Body of pancreas (tissue), 4 donors: ENCODE measurements at regions of chr6 and their contacts with region 1.

Region 1: DNA sequence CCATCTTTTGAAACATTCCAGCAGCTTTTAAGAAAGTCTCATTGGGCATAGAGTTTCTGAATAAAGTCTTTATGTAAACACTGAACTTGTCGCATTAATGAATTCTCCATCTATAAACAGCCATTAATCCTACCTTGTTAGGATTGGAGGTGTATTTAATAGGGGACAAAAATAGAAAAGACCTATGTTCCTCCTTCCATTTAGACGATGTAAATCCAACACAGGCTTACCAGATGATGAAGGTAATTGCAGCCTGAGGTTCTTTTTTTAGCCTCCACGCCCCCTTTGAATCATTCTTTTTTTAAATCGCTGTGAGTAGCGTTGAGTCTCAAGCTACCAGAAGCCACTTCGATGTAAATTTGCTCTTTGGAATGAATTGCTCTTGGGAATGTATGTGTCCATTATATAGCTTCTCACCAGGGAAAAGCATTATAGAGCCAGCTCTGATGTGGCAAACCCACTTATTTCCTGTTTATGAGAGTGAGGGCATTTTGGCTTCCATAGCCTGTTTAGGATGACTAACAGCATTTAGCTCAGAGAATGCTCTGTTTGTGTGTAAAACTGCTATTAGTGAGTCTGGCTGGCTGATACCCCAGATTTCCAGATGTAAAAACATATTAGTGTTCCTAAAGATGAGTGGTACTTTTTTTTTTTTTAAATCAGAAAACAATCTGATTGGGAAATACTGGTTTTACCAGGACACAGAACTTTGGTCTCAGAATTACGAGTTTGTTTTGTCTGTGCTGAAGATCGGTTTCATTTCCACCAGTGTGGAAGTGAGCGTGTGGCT is 74.9 kb upstream of the CLDN20 start:
- DNase-seq: peak in 1 of 4 donors; percentile 16
- ATAC-seq: no peak
- H3K4me3 ChIP-seq: no peak overlapping the region
- H3K27ac ChIP-seq: peak overlapping the region in 2 of 4 donors; percentile 33
- H3K4me1 ChIP-seq: peaks cover 14% of the 10 kb centered on the region
- H3K27me3 ChIP-seq: no peaks in the 10 kb centered on the region
- CTCF ChIP-seq: no peak
- POLR2A ChIP-seq: no peak

Region 2: DNA sequence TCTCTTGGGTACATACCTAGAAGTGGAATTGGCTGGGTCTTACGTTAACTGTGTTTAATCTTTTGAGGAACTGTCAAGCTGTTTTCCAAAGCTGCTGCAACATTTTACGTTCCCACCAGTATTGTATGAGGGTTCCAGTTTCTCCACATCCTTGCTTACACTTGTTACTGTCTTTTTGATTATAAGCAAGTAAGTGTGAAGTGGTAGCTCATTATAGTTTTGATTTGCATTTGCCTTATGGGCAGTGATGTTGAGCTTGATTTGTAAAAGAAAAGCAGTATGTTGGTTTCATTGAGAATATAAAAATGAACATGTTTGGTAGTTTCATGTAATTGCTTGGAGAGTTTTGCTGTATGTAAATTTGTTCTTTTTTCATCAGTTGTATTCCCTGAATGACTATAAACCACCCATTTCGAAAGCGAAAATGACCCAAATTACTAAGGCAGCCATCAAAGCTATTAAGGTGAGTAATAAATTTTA is 415.3 kb before region 1 on chr6:
- intact Hi-C with region 1: no loop called
- DNase-seq: no peak
- ATAC-seq: no peak
- H3K4me3 ChIP-seq: no peak overlapping the region
- H3K27ac ChIP-seq: no peak overlapping the region
- H3K4me1 ChIP-seq: peaks cover 13% of the 10 kb centered on the region
- H3K27me3 ChIP-seq: no peaks in the 10 kb centered on the region
- CTCF ChIP-seq: no peak
- POLR2A ChIP-seq: no peak

Region 3: GRCh38 chr6:154914288-154914687 is 274.6 kb before region 1 on chr6:
- intact Hi-C with region 1: no loop called
- DNase-seq: no peak
- ATAC-seq: no peak
- H3K4me3 ChIP-seq: no peak overlapping the region
- H3K27ac ChIP-seq: no peak overlapping the region
- H3K4me1 ChIP-seq: no peaks in the 10 kb centered on the region
- H3K27me3 ChIP-seq: no peaks in the 10 kb centered on the region
- CTCF ChIP-seq: no peak
- POLR2A ChIP-seq: no peak

Region 4: DNA sequence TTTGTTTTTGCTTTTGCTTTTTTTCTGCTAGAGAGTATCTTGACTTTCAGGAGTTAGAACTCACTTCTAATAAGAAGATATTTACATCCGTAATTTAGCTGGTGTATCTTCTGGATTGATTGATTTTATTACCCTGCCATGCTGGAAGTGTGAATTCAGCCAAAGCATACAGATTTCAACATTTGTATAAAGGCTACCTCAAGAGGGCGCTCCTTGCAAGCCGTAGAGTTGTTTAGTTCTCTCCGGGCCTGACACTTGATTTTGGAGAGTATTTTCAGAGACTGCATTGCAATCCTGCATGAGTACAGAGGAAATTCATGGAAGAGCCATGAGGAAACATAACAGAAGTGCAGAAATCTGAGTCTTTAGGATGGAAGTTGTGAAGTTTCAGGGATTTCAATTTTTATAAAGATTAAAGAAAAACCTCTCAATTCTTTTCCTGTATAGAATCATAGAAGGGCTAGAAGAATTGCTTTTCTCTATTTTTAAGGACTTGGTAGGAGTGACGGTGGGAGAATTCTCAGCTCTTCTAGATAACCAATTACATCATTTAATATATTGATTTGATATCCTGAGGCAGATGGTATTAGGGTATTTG is 260.5 kb before region 1 on chr6:
- intact Hi-C with region 1: loop called (anchors 10 kb)
- DNase-seq: peak; percentile 53 to 66 (median 60)
- ATAC-seq: peak; percentile 60
- H3K4me3 ChIP-seq: no peak overlapping the region
- H3K27ac ChIP-seq: no peak overlapping the region
- H3K4me1 ChIP-seq: no peaks in the 10 kb centered on the region
- H3K27me3 ChIP-seq: no peaks in the 10 kb centered on the region
- CTCF ChIP-seq: peak; percentile 44 to 75 (median 66)
- POLR2A ChIP-seq: no peak

Region 5: DNA sequence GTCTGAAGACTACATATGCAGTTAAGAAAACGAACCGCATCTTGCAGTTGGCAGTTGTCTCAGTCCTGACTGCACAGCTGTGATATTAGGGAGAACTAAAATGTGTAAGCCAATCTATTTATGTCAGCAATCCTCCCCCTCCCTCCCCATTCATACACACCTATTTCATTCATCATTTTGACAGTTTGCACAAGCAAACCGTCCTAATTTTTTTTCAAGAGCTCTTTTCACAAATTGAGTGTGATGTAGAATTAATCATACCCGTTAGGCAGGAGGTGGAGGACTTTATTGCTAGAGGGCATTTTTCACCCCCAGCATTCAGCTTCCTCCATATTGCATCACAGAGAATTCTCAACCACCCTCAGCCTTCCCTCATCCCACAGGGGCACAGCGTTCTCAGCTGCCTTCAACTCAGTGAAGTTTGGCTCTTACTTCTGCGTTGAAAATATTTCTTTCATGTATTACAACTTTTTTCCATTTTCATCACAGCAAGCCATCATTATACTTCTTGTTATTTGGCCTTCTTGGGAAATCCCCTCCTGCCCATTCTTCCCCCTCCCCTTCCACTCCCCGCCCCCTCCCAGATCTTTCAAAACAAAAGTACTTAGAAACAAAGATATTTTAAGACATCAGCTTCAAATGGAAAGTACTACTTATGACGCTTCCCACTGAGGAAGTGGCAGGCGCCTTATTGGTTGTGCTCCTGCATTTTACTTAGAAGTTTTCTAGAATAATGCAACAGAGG is 229.3 kb after region 1 on chr6:
- intact Hi-C with region 1: no loop called
- DNase-seq: peak in 2 of 4 donors; percentile 6 to 17
- ATAC-seq: peak; percentile 52
- H3K4me3 ChIP-seq: no peak overlapping the region
- H3K27ac ChIP-seq: peak overlapping the region in 2 of 4 donors; percentile 16 to 56
- H3K4me1 ChIP-seq: peaks cover 3% of the 10 kb centered on the region
- H3K27me3 ChIP-seq: no peaks in the 10 kb centered on the region
- CTCF ChIP-seq: no peak
- POLR2A ChIP-seq: no peak